MCF 10A (cell line): ENCODE measurements at regions of chr14 and their contacts with region 1.

Region 1: GRCh38 chr14:92603309-92604242 is 90.0 kb downstream of the RIN3 start:
- DNase-seq: peak; percentile 45
- H3K4me3 Mint-ChIP-seq: no peak overlapping the region
- H3K27ac Mint-ChIP-seq: no peak overlapping the region
- H3K4me1 Mint-ChIP-seq: peaks cover 32% of the 10 kb centered on the region
- H3K27me3 Mint-ChIP-seq: no peaks in the 10 kb centered on the region
- CTCF ChIP-seq: peak; percentile 30

Region 2: DNA sequence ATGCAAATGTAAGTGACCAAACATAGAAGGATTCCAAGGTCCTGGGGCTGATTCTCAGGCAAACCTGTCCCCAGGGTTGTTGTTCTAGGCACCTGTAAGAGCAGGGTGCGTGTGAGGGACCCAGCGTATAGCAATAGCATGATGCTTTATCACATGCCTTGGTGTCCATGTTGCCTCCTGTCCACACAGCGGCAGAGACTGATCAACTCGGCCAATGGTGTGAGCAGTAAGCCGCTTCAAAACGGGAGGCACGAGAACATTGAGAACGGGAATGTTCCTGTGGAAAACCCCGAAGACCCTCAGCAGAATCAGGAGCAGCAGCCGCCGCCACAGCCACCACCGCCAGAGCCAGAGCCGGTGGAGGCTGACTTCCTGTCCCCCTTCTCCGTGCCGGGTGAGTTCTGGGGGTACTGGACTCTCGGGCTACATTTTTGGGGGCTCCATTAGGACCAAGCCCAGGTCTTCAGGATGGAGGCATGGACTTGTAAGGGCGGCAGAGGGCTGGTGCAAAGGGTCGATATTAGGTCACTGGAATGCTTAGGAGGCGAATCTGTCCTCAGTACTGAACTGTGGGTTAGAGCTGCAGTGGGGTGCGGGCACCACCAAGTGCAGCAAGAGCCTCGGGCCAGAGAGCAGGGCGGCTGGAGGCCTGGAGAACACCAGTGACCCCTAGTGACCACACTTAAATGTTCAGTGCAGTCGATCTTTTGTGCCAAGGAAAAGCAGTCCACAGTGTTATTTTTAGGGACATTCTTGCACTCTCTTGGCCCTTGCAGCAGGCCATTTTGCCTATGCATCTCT is 147.2 kb before region 1 on chr14:
- CTCF ChIA-PET with region 1: no interaction called
- POLR2A ChIA-PET with region 1: no interaction called
- intact Hi-C with region 1: loop called (anchors 5 kb)
- DNase-seq: peak; percentile 63
- H3K4me3 Mint-ChIP-seq: no peak overlapping the region
- H3K27ac Mint-ChIP-seq: no peak overlapping the region
- H3K4me1 Mint-ChIP-seq: no peaks in the 10 kb centered on the region
- H3K27me3 Mint-ChIP-seq: no peaks in the 10 kb centered on the region
- CTCF ChIP-seq: peak; percentile 50

Region 3: GRCh38 chr14:92551044-92551841 is 52.3 kb before region 1 on chr14:
- CTCF ChIA-PET with region 1: no interaction called
- POLR2A ChIA-PET with region 1: no interaction called
- intact Hi-C with region 1: no loop called
- DNase-seq: no peak
- H3K4me3 Mint-ChIP-seq: no peak overlapping the region
- H3K27ac Mint-ChIP-seq: no peak overlapping the region
- H3K4me1 Mint-ChIP-seq: peaks cover 2% of the 10 kb centered on the region
- H3K27me3 Mint-ChIP-seq: no peaks in the 10 kb centered on the region
- CTCF ChIP-seq: no peak

Region 4: DNA sequence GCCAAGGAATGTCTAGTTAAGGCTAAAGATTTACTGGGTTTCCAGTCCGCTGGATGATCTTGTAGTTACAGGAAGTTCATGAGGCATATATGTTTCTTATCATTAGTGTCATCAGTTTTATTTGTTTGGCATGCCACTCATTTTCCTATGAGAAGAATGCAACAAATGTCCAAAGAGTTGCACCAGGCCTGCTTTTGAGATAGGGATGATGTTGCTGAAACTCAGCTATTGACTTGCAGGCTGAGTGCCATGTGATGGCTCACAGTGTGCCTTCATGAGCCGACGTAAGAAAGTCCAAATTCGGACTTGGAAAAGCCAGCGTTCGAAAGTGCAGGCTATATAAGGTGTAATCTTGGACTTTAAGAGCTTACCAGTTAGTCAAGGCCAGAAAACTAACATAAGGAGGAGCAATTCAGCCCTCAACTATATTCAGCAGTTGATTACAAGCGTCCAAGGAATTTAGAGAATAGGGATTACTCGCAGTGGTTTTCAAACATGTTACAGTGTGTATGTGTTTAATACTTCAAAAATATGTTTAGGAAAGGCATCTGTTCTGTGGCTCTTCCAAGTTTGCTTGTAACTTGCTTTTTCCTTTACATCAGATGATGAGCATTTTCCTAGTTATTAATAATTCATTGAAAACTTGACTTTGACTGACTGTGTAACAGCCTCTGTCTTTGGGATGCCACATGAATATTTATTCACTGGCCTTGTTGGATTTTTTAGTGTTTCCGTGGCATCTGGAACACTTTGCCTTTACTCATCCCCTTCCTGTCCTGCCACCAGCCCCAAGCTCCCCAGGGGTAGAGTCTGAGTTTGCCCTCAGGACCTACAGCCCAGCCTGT is 43.6 kb after region 1 on chr14:
- CTCF ChIA-PET with region 1: no interaction called
- POLR2A ChIA-PET with region 1: interaction called, 23 read pairs
- intact Hi-C with region 1: no loop called
- DNase-seq: no peak
- H3K4me3 Mint-ChIP-seq: no peak overlapping the region
- H3K27ac Mint-ChIP-seq: no peak overlapping the region
- H3K4me1 Mint-ChIP-seq: peaks cover 38% of the 10 kb centered on the region
- H3K27me3 Mint-ChIP-seq: no peaks in the 10 kb centered on the region
- CTCF ChIP-seq: no peak

Region 5: GRCh38 chr14:92680781-92681650 is 77.4 kb after region 1 on chr14:
- CTCF ChIA-PET with region 1: interaction called, 8 read pairs
- POLR2A ChIA-PET with region 1: no interaction called
- intact Hi-C with region 1: loop called (anchors 2 kb)
- DNase-seq: peak; percentile 77
- H3K4me3 Mint-ChIP-seq: no peak overlapping the region
- H3K27ac Mint-ChIP-seq: no peak overlapping the region
- H3K4me1 Mint-ChIP-seq: peaks cover 5% of the 10 kb centered on the region
- H3K27me3 Mint-ChIP-seq: no peaks in the 10 kb centered on the region
- CTCF ChIP-seq: peak; percentile 95